ENCODE measurements at regions of chrX and their contacts with region 1.

Region 1: DNA sequence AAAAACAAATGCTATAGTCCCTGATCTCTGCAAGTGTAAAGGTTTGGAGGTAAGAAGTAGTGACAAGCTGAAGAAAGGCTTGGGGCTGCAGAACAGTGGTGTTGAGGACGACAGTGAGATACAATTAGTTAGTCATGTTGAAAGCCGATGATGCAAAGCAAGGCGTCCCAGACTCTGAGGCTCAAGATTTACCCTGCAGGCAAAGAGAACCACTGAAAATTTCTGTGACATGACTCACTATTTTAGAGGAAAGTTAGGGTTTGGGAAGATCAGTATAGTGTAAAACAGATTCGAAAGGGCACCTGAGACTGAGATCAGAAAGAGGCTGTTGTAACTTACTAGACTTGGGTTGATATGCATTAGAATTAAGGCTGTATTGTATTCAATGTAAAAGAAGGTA is 281.3 kb upstream of the FTHL17 start:
- DNase-seq: peak; percentile 20 to 88
- H3K4me3 ChIP-seq: no peak overlapping the region
- H3K27ac ChIP-seq: peak overlapping the region; percentile 67
- H3K4me1 ChIP-seq: peaks cover 65% of the 10 kb centered on the region
- H3K27me3 ChIP-seq: no peaks in the 10 kb centered on the region
- CTCF ChIP-seq: no peak

Region 2: DNA sequence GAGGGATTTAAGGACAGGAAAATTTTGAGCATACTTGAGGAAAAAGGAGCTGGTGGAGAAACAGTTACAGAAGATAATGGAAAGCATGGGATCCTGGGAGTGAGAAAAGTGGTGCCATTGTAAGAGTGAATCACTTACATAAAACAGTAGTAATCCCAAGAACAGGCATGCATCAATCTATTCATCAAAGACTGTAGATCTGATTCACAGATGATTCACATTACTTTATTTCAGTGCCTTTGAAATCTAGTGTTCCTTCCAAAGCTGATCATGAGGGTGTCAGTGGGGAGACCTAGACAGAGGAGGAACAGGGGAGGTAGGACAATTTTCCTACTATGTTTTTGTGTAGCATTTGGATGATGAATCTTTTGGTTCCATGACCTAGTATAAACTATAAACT is 566.7 kb before region 1 on chrX:
- CTCF ChIA-PET with region 1: no interaction called
- POLR2A ChIA-PET with region 1: no interaction called
- intact Hi-C with region 1: no loop called
- DNase-seq: no peak
- H3K4me3 ChIP-seq: no peak overlapping the region
- H3K27ac ChIP-seq: no peak overlapping the region
- H3K4me1 ChIP-seq: no peaks in the 10 kb centered on the region
- H3K27me3 ChIP-seq: no peaks in the 10 kb centered on the region
- CTCF ChIP-seq: no peak

Region 3: DNA sequence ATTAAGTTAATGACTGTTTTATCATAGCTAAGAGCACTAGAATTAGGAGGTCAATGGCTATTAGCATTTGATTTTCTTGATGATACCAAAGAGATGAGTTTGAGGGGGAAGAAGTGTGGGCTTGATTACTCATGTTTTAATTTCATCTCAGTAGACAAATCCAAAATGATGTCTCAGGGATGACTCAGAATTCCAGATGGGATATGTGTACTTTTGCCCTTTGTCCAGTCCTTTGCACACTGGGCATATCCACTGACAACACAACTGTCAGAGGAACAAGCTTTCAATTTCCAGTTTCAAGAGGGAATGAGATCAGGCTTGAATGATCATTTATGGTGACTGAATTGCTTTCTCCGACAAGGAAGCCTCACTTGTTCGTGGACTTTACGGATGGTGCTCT is 44.0 kb after region 1 on chrX:
- CTCF ChIA-PET with region 1: interaction called, 10 read pairs
- POLR2A ChIA-PET with region 1: no interaction called
- intact Hi-C with region 1: no loop called
- DNase-seq: no peak
- H3K4me3 ChIP-seq: no peak overlapping the region
- H3K27ac ChIP-seq: no peak overlapping the region
- H3K4me1 ChIP-seq: no peaks in the 10 kb centered on the region
- H3K27me3 ChIP-seq: no peaks in the 10 kb centered on the region
- CTCF ChIP-seq: no peak